AG04449 (cell line): ENCODE measurements at regions of chr3 and their contacts with region 1.

Region 1: DNA sequence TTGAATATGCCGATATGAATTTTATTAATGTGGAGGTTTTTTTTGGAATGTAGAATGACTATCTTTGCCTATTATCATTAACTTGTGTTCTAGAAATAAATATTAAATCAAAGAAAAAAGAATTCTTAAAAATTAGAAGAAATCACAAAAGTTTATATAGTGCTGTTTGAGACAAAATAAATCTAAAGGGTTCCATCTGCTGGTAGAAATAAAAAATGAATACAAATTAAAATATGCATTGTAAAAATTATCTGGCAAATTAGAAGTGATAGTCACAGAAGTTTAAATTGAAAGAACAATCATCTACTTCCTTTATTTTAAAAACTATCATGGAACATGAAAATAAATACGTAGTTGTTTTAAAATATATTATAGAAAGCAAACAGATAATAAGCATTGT is 22.7 kb upstream of the ZBTB20 start:
- DNase-seq: no peak
- H3K4me3 ChIP-seq: no peak overlapping the region
- CTCF ChIP-seq: no peak

Region 2: DNA sequence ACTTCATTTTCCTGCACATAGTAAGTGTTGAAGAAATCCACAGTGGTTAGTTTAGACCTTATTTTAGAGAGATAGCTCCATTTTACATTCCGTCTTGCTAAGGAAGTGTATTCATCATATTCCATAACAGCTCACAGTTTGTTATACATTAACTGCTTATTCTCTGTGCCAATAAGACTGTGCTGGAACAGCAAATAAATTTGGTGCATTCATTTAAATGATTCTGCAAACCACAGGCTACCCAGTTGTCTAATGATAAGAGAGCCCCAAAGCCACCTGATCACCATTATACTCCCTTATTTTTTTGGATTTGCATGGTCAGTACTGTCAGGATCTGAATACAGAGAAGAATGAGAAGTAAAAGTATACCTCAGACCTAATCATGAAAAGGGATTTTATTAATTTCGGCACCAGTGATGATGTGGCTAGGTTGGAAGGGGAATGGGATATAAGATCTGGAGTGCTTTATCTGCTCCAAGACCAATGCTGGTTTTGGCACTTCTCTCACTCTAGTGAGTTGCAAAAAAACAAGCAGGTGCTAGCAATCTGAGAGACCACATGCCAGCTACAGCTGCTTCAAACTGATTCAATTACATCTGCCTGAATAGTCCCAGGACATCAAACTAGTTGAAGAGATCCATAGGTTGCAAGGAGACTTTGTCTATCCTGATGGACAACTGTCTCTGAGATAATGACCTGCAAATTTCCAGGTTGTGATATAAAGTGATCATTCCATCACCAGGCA is 277.5 kb before region 1 on chr3:
- CTCF ChIA-PET with region 1: no interaction called
- POLR2A ChIA-PET with region 1: no interaction called
- DNase-seq: no peak
- H3K4me3 ChIP-seq: no peak overlapping the region
- CTCF ChIP-seq: no peak

Region 3: DNA sequence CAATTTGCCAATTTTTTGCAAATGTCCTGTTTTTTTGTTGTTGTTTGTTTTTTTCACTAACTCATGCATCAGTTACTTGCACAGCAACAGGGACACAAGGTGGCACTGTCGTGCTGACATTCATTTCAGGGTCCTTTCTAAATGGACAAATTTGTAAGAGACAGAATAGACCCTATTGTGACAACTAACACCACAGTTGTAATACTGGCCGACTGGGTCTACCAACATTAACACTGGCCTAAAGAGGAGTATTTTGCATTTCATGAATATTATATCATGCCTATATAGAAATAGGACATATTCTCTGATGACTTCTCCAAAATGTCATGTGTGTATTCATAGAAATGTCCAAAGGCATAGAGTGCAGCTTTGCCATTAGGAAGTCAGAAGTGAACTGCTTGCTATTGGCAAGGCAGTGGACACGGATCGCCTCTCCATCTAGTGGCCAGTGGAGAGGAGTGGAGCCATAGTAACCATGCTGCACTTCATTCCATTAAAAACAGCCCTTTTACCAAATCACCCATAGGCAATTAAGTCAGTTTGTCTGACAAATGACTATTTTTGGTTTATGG is 77.5 kb before region 1 on chr3:
- CTCF ChIA-PET with region 1: interaction called, 23 read pairs
- POLR2A ChIA-PET with region 1: no interaction called
- DNase-seq: no peak
- H3K4me3 ChIP-seq: no peak overlapping the region
- CTCF ChIP-seq: peak; percentile 87